Mammary epithelial cell (primary cell): ENCODE measurements at regions of chr1 and their contacts with region 1.

Region 1: GRCh38 chr1:182855911-182856310 is 16.8 kb downstream of the DHX9 start:
- DNase-seq: no peak
- H3K4me3 ChIP-seq: no peak overlapping the region
- H3K27ac ChIP-seq: no peak overlapping the region
- H3K4me1 ChIP-seq: no peaks in the 10 kb centered on the region
- H3K27me3 ChIP-seq: no peaks in the 10 kb centered on the region
- CTCF ChIP-seq: no peak

Region 2: DNA sequence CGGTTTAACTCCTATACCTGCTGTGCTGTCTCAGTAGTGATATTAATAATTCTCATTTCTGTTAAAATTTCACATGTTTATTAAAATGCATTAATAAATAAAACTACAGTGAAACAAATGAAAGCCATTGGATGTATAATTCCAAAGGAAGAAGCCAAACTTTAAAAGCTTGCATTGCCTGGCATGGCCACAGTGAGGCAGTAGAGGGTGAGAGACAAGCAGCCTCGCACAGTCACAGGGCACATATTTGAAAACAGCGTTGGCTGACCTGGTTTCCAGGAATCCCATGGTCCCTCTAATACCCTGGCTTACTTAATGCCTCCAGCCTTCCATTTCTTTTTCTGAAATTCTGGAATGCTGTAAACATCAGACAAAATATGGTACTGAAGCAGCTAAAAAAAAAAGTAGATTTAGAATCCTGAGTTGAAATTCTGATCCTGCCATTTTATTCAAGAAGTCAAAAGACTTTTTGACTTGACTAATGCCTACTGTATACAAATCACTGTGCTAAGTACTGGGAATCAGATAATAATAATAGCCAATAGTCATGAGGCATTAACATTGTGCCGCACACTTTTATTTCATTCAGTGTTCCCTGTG is 260.2 kb before region 1 on chr1:
- CTCF ChIA-PET with region 1: no interaction called
- dilution Hi-C with region 1: loop called (anchors 5 kb)
- in situ Hi-C with region 1: no loop called
- intact Hi-C with region 1: no loop called
- DNase-seq: peak; percentile 33
- H3K4me3 ChIP-seq: no peak overlapping the region
- H3K27ac ChIP-seq: no peak overlapping the region
- H3K4me1 ChIP-seq: no peaks in the 10 kb centered on the region
- H3K27me3 ChIP-seq: no peaks in the 10 kb centered on the region
- CTCF ChIP-seq: peak; percentile 90 to 98

Region 3: GRCh38 chr1:182897696-182898095 is 41.8 kb after region 1 on chr1:
- CTCF ChIA-PET with region 1: no interaction called
- dilution Hi-C with region 1: loop called (anchors 5 kb)
- in situ Hi-C with region 1: no loop called
- intact Hi-C with region 1: no loop called
- DNase-seq: no peak
- H3K4me3 ChIP-seq: no peak overlapping the region
- H3K27ac ChIP-seq: no peak overlapping the region
- H3K4me1 ChIP-seq: no peaks in the 10 kb centered on the region
- H3K27me3 ChIP-seq: no peaks in the 10 kb centered on the region
- CTCF ChIP-seq: no peak

Region 4: DNA sequence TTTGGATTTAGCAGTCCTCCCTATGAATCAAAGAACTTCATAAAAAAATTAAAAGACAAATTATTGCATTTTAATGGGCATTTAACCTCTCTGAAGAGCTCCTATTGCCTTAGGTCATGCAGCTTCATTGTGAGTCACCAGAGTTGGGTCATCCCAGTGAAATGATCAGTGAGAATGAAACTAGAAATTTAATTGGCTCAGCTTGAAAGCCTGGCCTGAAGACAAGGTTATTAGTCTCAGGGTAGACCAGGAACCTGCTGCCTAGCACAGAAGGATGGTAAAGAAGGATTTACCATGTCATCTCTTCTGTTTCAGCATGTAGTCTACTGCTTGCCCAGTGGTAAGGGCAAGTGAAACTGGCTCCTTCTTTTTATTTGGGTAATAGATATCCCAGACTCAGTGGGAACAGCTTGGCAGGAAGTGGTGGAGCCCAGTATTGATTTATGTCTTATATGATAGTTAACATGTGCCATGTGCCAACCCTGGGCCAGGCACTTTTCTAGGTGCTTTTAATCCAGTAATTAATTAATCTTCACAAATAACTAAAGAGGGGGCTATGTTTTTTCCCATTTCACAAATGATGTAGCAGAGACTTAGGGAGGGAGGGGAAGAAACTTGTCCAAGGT is 353.7 kb after region 1 on chr1:
- CTCF ChIA-PET with region 1: no interaction called
- dilution Hi-C with region 1: no loop called
- in situ Hi-C with region 1: loop called in 1 of 2 experiments (anchors 10 kb)
- intact Hi-C with region 1: no loop called
- DNase-seq: peak; percentile 87
- H3K4me3 ChIP-seq: no peak overlapping the region
- H3K27ac ChIP-seq: peak overlapping the region; percentile 63
- H3K4me1 ChIP-seq: peaks cover 43% of the 10 kb centered on the region
- H3K27me3 ChIP-seq: no peaks in the 10 kb centered on the region
- CTCF ChIP-seq: no peak